K562 (cell line): ENCODE measurements at regions of chrX and their contacts with region 1.

Region 1: DNA sequence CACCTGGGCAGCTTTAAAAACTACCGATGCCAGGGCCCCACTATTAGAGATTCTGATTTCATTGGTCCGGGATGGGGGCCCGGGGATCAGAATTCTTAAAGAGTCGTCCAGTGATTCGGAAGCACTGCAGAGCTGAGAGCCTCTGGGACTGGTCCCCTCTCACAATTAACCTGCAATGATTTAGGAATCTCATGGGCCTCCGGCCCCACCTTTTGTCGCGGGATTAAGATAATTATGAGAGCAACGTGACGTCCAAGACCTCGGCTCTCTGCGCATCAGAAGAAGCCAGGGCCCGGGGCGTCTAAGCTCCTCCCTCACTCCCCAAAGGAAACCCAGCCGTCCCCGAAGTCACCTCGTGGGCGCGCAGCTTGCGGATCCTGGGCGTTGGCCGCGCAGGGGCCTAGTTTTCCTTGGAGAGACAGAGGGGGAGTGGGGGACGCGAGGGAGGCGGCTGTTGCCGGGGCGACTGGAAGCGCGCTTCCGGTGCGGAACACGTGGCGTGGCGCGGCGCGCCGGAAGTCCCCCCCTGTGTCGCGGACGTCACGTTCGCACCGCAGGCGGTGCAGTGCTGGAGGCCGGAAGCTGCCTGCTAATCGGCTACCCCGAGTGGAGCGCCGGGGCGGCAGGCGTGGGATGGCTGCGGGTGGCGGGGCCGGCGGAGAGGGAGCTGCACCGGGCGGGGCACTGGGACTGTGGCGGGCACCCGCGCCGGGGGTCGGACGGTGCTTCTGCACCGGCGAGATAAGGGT is at the start of gene GEMIN8:
- DNase-seq: peak; percentile 82 to 94 (median 82)
- ATAC-seq: peak; percentile 96
- H3K4me3 ChIP-seq: peak within 1 kb of the TSS; percentile 52
- H3K27ac ChIP-seq: peak within 1 kb of the TSS; percentile 85
- H3K4me1 ChIP-seq: peaks cover 4 to 14% of the 10 kb centered on the region in 2 experiments; a peak in 4 of 5 replicates
- H3K27me3 ChIP-seq: no peaks in the 10 kb centered on the region
- CTCF ChIP-seq: no peak
- EP300 ChIP-seq: no peak
- POLR2A ChIP-seq: peak; percentile 74
- RAD21 ChIP-seq: no peak
- polyA plus RNA-seq, gene GEMIN8: 16.9 to 23.8 TPM

Region 2: DNA sequence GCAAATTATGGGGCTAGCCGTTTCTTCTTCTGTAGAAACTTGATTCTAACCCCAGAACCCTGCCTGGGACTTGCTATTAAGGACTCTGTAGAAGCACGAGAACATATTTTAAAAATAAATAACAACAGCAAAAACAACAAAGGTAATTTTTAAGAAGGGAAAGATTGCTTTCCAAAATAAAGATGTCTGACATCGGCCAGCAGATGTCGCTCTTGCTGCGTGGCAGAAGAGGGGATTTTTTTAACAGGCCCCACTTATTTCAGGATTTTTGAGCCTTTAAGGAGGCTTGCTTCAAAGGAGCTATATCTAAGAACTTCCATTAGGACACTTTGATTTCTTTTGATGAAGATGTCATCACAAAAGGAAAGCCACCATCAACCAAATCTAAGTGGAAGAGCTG is 523.0 kb before region 1 on chrX:
- CTCF ChIA-PET with region 1: interaction called, 15 read pairs
- POLR2A ChIA-PET with region 1: no interaction called
- in situ Hi-C with region 1: no loop called
- intact Hi-C with region 1: loop called (anchors 1 kb)
- DNase-seq: peak; percentile 54 to 66 (median 58)
- ATAC-seq: no peak
- H3K4me3 ChIP-seq: no peak overlapping the region
- H3K27ac ChIP-seq: no peak overlapping the region
- H3K4me1 ChIP-seq: no peaks in the 10 kb centered on the region
- H3K27me3 ChIP-seq: no peaks in the 10 kb centered on the region
- CTCF ChIP-seq: peak; percentile 64 to 84 (median 67)
- EP300 ChIP-seq: no peak
- POLR2A ChIP-seq: no peak
- RAD21 ChIP-seq: peak; percentile 86 to 88

Region 3: GRCh38 chrX:13646154-13646549 is 383.4 kb before region 1 on chrX:
- CTCF ChIA-PET with region 1: no interaction called
- POLR2A ChIA-PET with region 1: no interaction called
- in situ Hi-C with region 1: loop called (anchors 5 kb)
- intact Hi-C with region 1: loop called (anchors 1 kb)
- DNase-seq: peak; percentile 22 to 83 (median 34)
- ATAC-seq: peak; percentile 82
- H3K4me3 ChIP-seq: no peak overlapping the region
- H3K27ac ChIP-seq: peak overlapping the region; percentile 100; the same call in 2 of the 3 replicates
- H3K4me1 ChIP-seq: peaks cover 13 to 49% of the 10 kb centered on the region in 2 experiments; a peak in 4 of 5 replicates
- H3K27me3 ChIP-seq: no peaks in the 10 kb centered on the region
- CTCF ChIP-seq: peak; percentile 74 to 77 (median 75)
- EP300 ChIP-seq: no peak
- POLR2A ChIP-seq: no peak
- RAD21 ChIP-seq: peak; percentile 69 to 81

Region 4: DNA sequence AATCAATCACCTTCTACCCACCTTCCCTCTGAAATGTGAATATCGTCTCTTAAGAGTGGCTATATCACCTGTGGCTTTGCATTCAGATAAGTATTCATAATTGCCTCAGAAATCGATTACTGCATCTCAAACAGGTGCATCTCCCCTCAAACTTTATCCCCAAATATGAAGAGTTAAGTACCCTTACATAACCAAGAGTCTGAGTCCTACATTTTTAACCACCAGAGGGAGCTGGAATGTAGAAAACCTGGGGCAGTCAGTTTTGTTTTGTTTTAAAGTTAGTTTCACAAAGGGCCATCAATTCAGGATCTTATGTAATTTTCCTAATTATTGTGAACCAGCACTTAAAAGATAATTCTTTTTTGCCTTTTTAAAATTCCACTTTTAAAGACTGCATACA is 371.0 kb before region 1 on chrX:
- CTCF ChIA-PET with region 1: interaction called, 6 read pairs
- POLR2A ChIA-PET with region 1: no interaction called
- in situ Hi-C with region 1: loop called (anchors 5 kb)
- intact Hi-C with region 1: loop called (anchors 1 kb)
- DNase-seq: peak; percentile 12 to 58 (median 22)
- ATAC-seq: peak; percentile 76
- H3K4me3 ChIP-seq: no peak overlapping the region
- H3K27ac ChIP-seq: no peak overlapping the region
- H3K4me1 ChIP-seq: peaks cover 0 to 3% of the 10 kb centered on the region in 2 experiments; a peak in 2 of 5 replicates
- H3K27me3 ChIP-seq: no peaks in the 10 kb centered on the region
- CTCF ChIP-seq: peak; percentile 52 to 72 (median 55); a peak in 5 of 6 replicates
- EP300 ChIP-seq: no peak
- POLR2A ChIP-seq: no peak
- RAD21 ChIP-seq: peak; percentile 81 to 88

Region 5: GRCh38 chrX:13764765-13765164 is 264.8 kb before region 1 on chrX:
- CTCF ChIA-PET with region 1: no interaction called
- POLR2A ChIA-PET with region 1: no interaction called
- in situ Hi-C with region 1: loop called (anchors 10 kb)
- intact Hi-C with region 1: no loop called
- DNase-seq: peak in 2 of 4 experiments; percentile 10 to 28
- ATAC-seq: peak; percentile 77
- H3K4me3 ChIP-seq: no peak overlapping the region
- H3K27ac ChIP-seq: no peak overlapping the region
- H3K4me1 ChIP-seq: no peaks in the 10 kb centered on the region
- H3K27me3 ChIP-seq: no peaks in the 10 kb centered on the region
- CTCF ChIP-seq: peak; percentile 20 to 27 (median 26); a peak in 3 of 6 replicates
- EP300 ChIP-seq: no peak
- POLR2A ChIP-seq: no peak
- RAD21 ChIP-seq: no peak

Region 6: GRCh38 chrX:13923845-13924244 is 105.8 kb before region 1 on chrX:
- CTCF ChIA-PET with region 1: no interaction called
- POLR2A ChIA-PET with region 1: no interaction called
- in situ Hi-C with region 1: no loop called
- intact Hi-C with region 1: loop called (anchors 10 kb)
- DNase-seq: no peak
- ATAC-seq: no peak
- H3K4me3 ChIP-seq: no peak overlapping the region
- H3K27ac ChIP-seq: no peak overlapping the region
- H3K4me1 ChIP-seq: no peaks in the 10 kb centered on the region
- H3K27me3 ChIP-seq: peaks cover 0 to 6% of the 10 kb centered on the region in 2 experiments; a peak in 2 of 5 replicates
- CTCF ChIP-seq: no peak
- EP300 ChIP-seq: no peak
- POLR2A ChIP-seq: no peak
- RAD21 ChIP-seq: no peak